Right cardiac atrium (tissue), 5 donors: ENCODE measurements at regions of chr2 and their contacts with region 1.

Region 1: GRCh38 chr2:215460682-215461382 is 25.0 kb upstream of the FN1 start:
- DNase-seq: no peak
- ATAC-seq: peak; percentile 82 to 83
- H3K4me3 ChIP-seq: no peak overlapping the region
- H3K27ac ChIP-seq: no peak overlapping the region
- H3K4me1 ChIP-seq: no peaks in the 10 kb centered on the region
- H3K27me3 ChIP-seq: no peaks in the 10 kb centered on the region

Region 2: DNA sequence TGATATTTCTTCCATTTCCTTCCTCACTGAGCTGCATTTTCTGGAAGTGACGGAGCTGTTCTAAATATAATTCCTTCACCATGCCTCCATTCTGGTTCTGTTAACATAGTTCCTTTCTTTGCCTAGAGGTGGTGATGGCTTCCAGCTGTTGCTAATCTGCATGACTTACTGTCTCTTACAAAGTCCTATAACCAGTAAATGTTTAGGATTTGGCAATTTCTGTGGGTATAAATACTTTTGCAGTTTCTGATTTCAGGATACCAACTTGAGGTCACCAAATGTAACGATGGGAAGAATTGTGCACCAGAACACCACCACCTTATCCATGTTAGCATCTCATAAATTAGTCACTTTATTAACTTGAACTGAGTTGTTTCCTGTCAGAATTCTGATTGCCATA is 76.8 kb after region 1 on chr2:
- intact Hi-C with region 1: loop called in 1 of 4 experiments (anchors 10 kb)
- DNase-seq: no peak
- ATAC-seq: peak in 1 of 2 donors; percentile 49
- H3K4me3 ChIP-seq: no peak overlapping the region
- H3K27ac ChIP-seq: no peak overlapping the region
- H3K4me1 ChIP-seq: peaks cover 3% of the 10 kb centered on the region
- H3K27me3 ChIP-seq: no peaks in the 10 kb centered on the region

Region 3: GRCh38 chr2:215717501-215718381 is 256.9 kb after region 1 on chr2:
- intact Hi-C with region 1: no loop called
- DNase-seq: no peak
- ATAC-seq: peak; percentile 53 to 64
- H3K4me3 ChIP-seq: peak overlapping the region; percentile 30
- H3K27ac ChIP-seq: peak overlapping the region; percentile 77
- H3K4me1 ChIP-seq: no peaks in the 10 kb centered on the region
- H3K27me3 ChIP-seq: no peaks in the 10 kb centered on the region

Region 4: GRCh38 chr2:216034065-216034464 is 573.2 kb after region 1 on chr2:
- intact Hi-C with region 1: no loop called
- DNase-seq: peak; percentile 54 to 80 (median 69)
- ATAC-seq: peak; percentile 43 to 57
- H3K4me3 ChIP-seq: no peak overlapping the region
- H3K27ac ChIP-seq: no peak overlapping the region
- H3K4me1 ChIP-seq: no peaks in the 10 kb centered on the region
- H3K27me3 ChIP-seq: no peaks in the 10 kb centered on the region